Ovary (tissue), 10 donors: ENCODE measurements at regions of chr3 and their contacts with region 1.

Region 1: GRCh38 chr3:71583566-71584449 is at the start of gene FOXP1:
- DNase-seq: peak; percentile 68 to 85 (median 81)
- H3K4me3 ChIP-seq: peak within 1 kb of the TSS; percentile 86
- H3K27ac ChIP-seq: peak within 1 kb of the TSS; percentile 99 to 100
- H3K4me1 ChIP-seq: peaks cover 2% of the 10 kb centered on the region
- H3K27me3 ChIP-seq: no peaks in the 10 kb centered on the region
- CTCF ChIP-seq: no peak
- EP300 ChIP-seq: no peak
- POLR2A ChIP-seq: peak; percentile 42
- total RNA-seq, gene FOXP1: 89.4 to 126 (median 119) TPM

Region 2: DNA sequence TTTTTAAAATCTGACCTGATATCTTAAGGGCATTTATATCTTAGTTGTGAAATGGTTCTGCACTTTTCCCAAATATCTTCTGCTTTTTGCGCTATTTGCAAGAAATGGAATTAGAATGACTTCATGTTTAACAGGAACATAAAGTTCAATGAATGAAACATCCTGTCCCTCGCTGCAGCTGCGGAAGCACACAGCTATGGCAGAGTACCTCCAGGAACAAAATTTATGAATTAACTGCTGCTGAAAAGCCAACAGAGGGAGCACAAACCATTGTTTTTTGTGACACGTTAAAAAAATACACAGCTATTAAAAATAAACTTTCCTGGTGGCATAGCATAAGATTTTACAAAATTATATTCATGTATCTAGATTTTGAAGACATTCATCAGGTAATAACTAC is 867.0 kb before region 1 on chr3:
- intact Hi-C with region 1: loop called in 1 of 4 experiments (anchors 10 kb)
- DNase-seq: peak; percentile 8 to 39 (median 27)
- H3K4me3 ChIP-seq: no peak overlapping the region
- H3K27ac ChIP-seq: no peak overlapping the region
- H3K4me1 ChIP-seq: no peaks in the 10 kb centered on the region
- H3K27me3 ChIP-seq: no peaks in the 10 kb centered on the region
- CTCF ChIP-seq: peak in 2 of 3 donors; percentile 24 to 59
- EP300 ChIP-seq: no peak
- POLR2A ChIP-seq: no peak

Region 3: GRCh38 chr3:71064288-71064955 is 519.4 kb before region 1 on chr3:
- intact Hi-C with region 1: loop called in 2 of 4 experiments (anchors 5 to 10 kb)
- DNase-seq: peak in 4 of 5 donors; percentile 60 to 76 (median 66)
- H3K4me3 ChIP-seq: peak overlapping the region; percentile 67
- H3K27ac ChIP-seq: peak overlapping the region; percentile 96 to 97
- H3K4me1 ChIP-seq: peaks cover 12% of the 10 kb centered on the region
- H3K27me3 ChIP-seq: no peaks in the 10 kb centered on the region
- CTCF ChIP-seq: peak in 1 of 3 donors; percentile 34
- EP300 ChIP-seq: no peak
- POLR2A ChIP-seq: peak; percentile 12

Region 4: DNA sequence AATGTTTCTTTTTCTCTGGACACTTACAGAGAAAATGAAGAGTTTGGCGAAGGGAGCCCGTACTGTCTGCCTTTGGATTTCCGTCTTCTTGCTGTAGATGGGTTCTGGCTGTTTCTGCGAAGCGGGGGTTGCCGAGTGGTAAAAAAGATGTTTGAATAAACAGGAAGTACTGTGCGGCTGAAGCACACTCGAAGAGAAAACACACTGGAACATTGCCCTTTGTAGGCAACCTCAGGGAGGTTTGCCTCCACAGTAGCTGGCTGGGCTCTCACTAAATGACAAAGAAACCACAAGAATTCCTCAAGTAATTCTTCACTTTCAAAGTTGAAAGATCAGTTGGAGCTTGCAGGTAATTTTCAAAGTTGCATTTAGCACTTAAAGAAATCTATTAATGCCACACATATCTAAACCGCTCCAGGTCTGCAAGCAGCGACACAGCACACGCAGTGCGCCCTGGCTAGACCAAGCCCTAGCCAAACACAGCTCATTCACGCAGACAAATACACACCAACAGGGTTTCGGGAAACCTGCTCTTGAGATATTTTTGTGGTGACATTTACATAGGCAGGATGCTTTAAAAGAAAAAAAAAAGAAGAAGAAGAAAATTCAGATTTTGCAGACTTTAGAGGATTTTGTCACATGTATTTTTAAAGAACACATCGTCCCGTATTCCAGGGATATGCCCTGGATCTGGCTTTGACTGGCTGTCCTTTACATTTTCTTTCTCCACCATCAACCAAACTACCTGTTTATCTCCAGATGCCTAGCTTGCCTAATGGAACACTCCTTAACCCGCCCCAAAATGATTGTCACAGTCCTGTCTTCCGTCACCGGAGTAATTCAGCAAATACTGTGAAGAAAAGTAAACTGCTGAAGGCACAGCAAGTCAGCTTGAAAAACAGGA is 453.1 kb before region 1 on chr3:
- intact Hi-C with region 1: loop called in 1 of 4 experiments (anchors 5 kb)
- DNase-seq: peak; percentile 67 to 76 (median 72)
- H3K4me3 ChIP-seq: peak overlapping the region; percentile 50
- H3K27ac ChIP-seq: peak overlapping the region; percentile 30 to 89
- H3K4me1 ChIP-seq: peaks cover 16% of the 10 kb centered on the region
- H3K27me3 ChIP-seq: no peaks in the 10 kb centered on the region
- CTCF ChIP-seq: no peak
- EP300 ChIP-seq: no peak
- POLR2A ChIP-seq: peak; percentile 19

Region 5: DNA sequence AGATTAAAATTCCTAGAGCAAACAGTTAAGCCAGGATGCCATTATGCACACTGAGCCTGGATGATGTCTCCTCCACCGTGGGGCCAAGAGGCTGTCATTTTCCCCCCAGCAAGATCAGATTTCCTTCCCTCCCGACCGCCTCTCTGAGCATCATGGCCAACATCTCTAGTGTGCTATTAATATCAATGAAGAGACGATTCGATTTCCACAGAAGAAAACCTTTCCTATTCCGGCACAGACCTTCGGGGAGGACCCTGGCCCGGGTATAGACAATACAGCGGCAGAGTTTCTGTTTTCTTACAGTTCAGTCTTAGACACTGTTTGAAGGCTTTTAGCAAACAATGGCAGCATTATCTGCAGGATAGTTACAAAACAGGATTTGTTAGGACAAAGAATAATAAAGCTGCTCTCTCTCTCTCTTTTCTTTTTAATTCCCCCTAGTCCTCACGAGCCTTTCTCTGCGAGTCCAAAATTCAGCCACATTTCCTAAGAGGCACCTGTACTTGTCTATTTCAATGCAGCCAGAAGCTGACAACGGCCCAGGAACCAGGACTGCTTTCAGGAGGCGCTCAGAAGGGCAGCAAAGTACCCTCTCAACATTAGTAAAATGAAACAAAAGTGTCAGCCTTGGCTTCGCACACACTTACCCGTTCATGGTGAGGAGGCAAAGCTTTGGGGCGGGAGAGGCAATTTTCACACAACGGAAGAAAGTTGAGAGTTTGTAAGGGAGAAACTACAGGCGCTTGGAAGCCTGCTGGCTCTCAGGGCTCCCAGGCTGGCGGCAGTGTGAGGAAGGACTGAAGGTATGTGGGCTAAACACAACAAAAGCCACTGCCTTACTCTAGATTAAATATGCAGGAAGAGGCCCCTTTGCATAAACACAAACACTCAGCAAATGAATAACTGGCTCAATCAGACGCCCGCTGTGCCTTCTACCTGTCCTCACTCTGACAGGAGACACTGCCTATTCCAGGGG is 278.3 kb before region 1 on chr3:
- intact Hi-C with region 1: loop called in 1 of 4 experiments (anchors 5 kb)
- DNase-seq: peak in 3 of 5 donors; percentile 22 to 39 (median 25)
- H3K4me3 ChIP-seq: peak overlapping the region; percentile 25
- H3K27ac ChIP-seq: peak overlapping the region; percentile 8 to 55
- H3K4me1 ChIP-seq: peaks cover 4% of the 10 kb centered on the region
- H3K27me3 ChIP-seq: no peaks in the 10 kb centered on the region
- CTCF ChIP-seq: no peak
- EP300 ChIP-seq: no peak
- POLR2A ChIP-seq: no peak

Region 6: GRCh38 chr3:71926262-71926600 is 342.4 kb after region 1 on chr3:
- intact Hi-C with region 1: no loop called
- DNase-seq: no peak
- H3K4me3 ChIP-seq: no peak overlapping the region
- H3K27ac ChIP-seq: no peak overlapping the region
- H3K4me1 ChIP-seq: peaks cover 3% of the 10 kb centered on the region
- H3K27me3 ChIP-seq: no peaks in the 10 kb centered on the region
- CTCF ChIP-seq: no peak
- EP300 ChIP-seq: no peak
- POLR2A ChIP-seq: no peak